Sciatic nerve (tissue), 2 donors: ENCODE measurements at regions of chr14 and their contacts with region 1.

Region 1: DNA sequence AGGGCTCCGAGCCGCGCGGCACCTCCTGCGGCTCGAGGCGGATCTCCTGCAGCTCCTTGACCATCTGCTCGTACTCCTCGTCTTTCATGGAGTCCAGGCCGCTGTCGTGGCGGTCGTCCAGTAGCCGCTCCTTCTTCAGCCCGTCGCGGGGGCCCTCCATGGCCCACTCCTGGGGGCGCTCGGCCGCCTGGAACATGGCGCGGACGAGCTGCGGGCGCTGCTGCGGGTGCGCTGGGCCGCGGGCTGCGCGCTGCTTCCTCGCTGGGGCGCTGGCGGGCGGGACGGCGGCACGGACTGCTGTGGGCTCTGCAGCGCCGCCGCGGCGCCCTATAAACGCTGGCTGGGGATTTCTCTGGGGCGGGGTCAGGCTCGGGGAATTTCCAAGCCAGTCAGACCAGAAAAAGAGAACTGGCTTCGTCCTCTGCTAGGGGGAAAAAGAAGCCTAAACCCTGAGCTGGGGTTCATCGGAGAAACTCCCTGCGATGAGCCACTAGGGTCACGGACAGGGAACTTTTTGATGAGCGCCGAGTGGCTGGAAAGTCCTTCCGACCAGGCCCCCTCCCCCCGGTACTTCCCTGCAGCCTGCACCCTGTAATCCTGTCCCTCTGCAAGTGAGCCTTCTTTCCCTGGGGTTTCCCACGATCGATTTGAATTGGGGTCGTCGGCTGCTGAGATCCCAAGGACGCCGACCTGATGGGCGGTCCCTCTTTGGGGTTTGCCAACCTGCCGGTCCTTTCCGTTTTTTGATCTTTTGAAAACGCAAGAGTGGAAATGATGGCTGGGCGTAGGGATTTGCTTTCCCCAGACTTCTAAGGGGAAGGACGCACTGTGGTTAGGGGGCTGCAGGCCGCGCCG is at the start of gene NFKBIA:
- DNase-seq: peak; percentile 96
- ATAC-seq: peak; percentile 69
- total RNA-seq, gene NFKBIA: 177 TPM

Region 2: DNA sequence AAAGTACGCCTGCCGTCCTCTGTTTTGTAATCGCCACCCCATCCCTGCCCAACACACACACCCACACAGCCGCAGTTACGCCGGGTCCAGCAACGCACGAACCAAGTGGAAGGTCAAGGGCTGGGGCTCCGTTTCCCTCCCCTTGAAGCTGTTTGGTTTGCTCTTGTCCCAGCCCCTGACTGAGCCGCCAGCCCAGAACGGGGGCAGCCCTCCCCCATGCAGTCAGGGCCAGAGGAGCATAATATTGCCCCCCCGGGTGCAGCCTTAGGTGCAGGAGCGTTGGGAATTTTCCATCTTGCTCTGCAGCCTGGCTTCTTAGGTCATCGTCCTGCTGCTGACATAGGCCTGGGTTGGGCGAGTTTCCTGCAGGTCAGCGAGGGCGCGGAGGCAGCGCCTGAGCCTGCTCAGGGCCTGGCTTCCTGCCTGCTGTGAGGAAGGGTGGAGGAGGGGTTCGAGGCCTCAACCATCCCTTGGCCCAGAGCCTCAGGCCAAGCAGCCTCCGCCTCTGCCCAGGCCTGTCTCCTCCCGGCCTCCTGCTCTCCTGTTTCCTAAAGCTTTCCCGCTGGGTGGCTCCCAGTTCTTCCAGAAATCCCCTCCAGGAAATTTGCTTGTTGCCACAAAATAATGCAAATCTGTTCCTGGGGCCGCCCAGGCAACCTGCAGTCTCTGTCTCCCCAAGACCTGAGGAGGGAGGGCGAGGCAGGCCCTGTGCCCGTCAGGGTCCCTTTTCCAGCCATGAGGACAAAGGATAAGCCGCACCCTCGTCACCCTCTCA is 68.0 kb before region 1 on chr14:
- intact Hi-C with region 1: loop called (anchors 5 kb)
- DNase-seq: peak; percentile 97
- ATAC-seq: peak; percentile 92